ENCODE measurements at regions of chr4 and their contacts with region 1.

Region 1: DNA sequence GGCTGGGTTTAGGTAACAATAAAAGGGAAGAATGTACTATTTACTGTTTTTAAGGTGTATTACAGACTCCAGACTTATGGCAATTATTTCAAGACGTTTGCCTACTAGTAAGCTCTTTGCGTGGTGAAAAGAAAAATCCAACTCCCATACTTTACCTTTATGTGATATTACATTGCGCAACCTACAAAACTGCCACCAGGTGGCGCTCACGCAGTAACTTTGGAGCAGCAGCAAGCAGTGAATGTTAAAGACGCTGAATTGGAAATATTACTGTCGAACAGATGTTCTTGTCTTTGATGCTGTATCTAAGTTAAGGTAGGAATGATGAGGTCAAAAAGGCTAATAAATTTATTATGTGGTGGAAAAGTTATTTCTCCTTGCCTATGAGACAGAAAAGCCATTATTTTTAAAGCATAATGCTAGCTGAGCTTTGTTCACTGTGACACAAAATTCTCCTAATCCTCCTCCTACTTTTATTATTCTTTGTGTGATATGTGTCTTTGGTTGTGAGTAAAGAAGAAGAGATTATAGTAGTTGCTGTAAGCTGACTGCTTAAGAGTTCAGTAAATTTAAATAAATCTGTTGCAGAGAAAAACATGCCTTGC is 1099.8 kb upstream of the TENM3 start:
- DNase-seq: peak; percentile 71 to 84
- ATAC-seq: peak in 3 of 4 donors; percentile 51 to 76 (median 55)
- H3K4me3 ChIP-seq: no peak overlapping the region
- H3K27ac ChIP-seq: no peak overlapping the region
- H3K4me1 ChIP-seq: no peaks in the 10 kb centered on the region
- H3K27me3 ChIP-seq: no peaks in the 10 kb centered on the region
- CTCF ChIP-seq: peak; percentile 93

Region 2: GRCh38 chr4:180625653-180626052 is 517.7 kb before region 1 on chr4:
- intact Hi-C with region 1: no loop called
- DNase-seq: no peak
- ATAC-seq: no peak
- H3K4me3 ChIP-seq: no peak overlapping the region
- H3K27ac ChIP-seq: no peak overlapping the region
- H3K4me1 ChIP-seq: no peaks in the 10 kb centered on the region
- H3K27me3 ChIP-seq: no peaks in the 10 kb centered on the region
- CTCF ChIP-seq: no peak

Region 3: DNA sequence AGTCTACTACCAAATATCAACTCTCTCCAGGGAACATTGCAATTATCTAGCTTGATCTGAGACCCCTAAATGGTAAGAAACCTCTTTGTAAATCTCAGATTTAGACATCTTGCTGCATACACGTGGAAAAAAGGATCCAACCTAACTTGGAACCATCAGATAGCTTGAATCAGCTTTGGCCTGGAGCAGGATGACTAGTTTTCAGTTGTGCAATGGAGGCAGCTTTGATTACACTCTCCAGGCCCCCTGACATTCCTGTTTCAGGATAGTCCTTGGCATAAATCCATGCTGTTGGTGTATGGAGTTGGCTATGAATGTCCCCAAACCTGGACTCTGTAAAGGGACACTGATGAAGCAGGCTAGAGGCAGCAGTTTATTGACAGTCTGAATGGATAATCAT is 38.0 kb after region 1 on chr4:
- intact Hi-C with region 1: no loop called
- DNase-seq: no peak
- ATAC-seq: no peak
- H3K4me3 ChIP-seq: no peak overlapping the region
- H3K27ac ChIP-seq: no peak overlapping the region
- H3K4me1 ChIP-seq: no peaks in the 10 kb centered on the region
- H3K27me3 ChIP-seq: no peaks in the 10 kb centered on the region
- CTCF ChIP-seq: no peak

Region 4: DNA sequence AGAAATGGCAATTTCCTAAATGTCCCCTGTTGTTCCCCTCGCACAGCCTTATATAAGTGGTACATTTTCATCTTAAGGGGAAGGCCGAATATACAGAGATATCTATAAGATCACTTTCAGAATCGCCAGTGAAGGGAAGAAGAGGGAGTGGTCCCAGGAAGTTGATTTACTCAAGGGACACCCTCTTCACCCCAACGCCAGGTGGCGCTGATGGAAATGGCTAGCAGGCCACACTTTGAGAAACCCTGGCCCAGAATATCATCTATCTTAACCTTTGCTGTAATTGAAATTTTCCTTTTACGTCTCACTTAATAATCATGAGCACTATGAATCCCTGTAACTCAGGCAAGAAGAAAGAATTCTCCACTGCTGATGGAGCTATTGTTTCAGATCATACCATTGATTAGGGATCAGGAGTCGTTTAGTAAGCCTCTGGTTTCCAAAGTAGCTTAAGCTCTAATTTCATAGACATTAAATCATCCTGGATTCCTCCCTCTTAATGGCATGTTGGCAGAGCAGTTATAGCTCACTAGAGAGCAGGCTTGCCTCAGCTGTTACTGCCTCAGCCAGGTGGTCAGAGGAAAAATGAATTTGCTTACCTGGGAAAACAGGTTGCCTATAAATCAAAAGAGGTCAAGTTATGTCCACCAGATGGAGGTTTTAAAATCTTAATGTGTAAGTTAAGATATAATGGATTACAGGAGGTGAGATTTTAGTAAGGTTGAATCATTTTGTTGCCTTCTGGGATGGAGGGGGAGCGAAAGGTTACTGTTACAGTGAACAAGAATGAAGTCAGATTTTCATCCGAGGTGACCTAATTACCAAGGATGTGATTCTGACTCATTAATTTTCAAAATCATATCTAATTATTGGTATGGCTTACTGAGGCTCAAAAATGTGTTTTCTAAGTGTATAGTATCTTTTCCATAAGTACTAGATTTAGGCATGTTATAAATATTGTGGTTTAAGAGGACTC is 158.7 kb after region 1 on chr4:
- intact Hi-C with region 1: loop called in 1 of 2 experiments (anchors 5 kb)
- DNase-seq: peak; percentile 17 to 59
- ATAC-seq: peak in 1 of 4 donors; percentile 61
- H3K4me3 ChIP-seq: no peak overlapping the region
- H3K27ac ChIP-seq: no peak overlapping the region
- H3K4me1 ChIP-seq: peaks cover 6% of the 10 kb centered on the region
- H3K27me3 ChIP-seq: no peaks in the 10 kb centered on the region
- CTCF ChIP-seq: peak; percentile 58

Region 5: GRCh38 chr4:181528570-181529184 is 385.3 kb after region 1 on chr4:
- intact Hi-C with region 1: loop called (anchors 2 kb)
- DNase-seq: peak; percentile 43 to 71
- ATAC-seq: peak; percentile 64 to 81 (median 66)
- H3K4me3 ChIP-seq: no peak overlapping the region
- H3K27ac ChIP-seq: no peak overlapping the region
- H3K4me1 ChIP-seq: no peaks in the 10 kb centered on the region
- H3K27me3 ChIP-seq: peaks cover 0 to 4% (median 0%) of the 10 kb centered on the region in 3 donors
- CTCF ChIP-seq: peak; percentile 84